Sciatic nerve (tissue), 2 donors: ENCODE measurements at regions of chr10 and their contacts with region 1.

Region 1: GRCh38 chr10:61882621-61883373 is 18.7 kb upstream of the ARID5B start:
- DNase-seq: no peak
- ATAC-seq: no peak

Region 2: GRCh38 chr10:60048091-60048501 is 1834.7 kb before region 1 on chr10:
- intact Hi-C with region 1: no loop called
- DNase-seq: no peak
- ATAC-seq: no peak

Region 3: DNA sequence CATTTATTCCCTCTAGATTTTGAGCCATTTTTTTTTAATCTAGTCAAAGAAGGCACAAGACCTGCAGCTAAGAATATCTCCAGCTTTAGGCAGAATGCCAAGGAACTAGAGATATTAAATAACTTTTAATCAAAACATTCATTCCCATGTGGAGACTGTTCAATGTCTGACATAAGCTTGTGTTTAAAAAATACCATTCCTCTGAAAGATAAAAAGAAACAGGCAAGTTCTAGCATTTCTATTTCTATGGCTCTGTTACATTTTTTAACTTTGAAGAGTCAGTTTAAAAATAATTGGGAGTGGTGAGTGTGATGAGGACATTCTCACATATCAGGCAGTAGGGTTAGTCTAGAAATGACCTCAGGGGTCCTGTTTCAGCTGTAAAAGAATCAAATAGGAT is 986.8 kb before region 1 on chr10:
- intact Hi-C with region 1: loop called (anchors 5 kb)
- DNase-seq: no peak
- ATAC-seq: no peak

Region 4: GRCh38 chr10:63093227-63093626 is 1210.4 kb after region 1 on chr10:
- intact Hi-C with region 1: no loop called
- DNase-seq: no peak
- ATAC-seq: no peak